Aorta (tissue), 5 donors: ENCODE measurements at regions of chr6 and their contacts with region 1.

Region 1: DNA sequence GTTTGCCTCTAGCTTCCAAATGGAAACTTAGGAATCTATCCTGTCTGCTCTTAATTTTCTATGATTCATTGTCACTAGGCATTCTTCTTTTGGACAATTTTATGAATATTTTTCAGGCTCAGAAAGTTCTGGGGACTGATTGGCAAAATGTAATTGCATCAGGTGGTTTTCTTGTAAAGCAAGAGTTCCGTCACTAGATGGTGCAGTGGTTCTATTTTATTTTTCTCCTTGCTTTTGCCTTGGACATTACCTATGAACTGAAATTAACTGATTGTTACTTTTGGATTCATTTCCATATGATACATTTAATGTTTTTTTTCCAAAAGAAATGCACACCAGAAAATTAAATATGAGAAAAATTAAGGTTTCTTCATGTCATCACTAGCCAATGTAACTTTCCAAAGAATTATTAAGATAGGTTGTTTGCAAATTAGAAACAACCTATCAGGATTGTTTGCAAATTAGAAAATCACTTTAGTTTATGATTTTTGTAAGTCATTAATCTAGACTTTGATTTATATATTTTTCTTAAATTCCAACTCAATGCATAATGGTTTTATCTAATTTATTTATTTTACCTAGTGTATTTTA is 48.0 kb downstream of the TMEM170B start:
- DNase-seq: no peak
- ATAC-seq: no peak
- H3K4me3 ChIP-seq: no peak overlapping the region
- H3K27ac ChIP-seq: no peak overlapping the region
- H3K4me1 ChIP-seq: peaks cover 0 to 4% of the 10 kb centered on the region in 2 donors
- H3K27me3 ChIP-seq: no peaks in the 10 kb centered on the region

Region 2: GRCh38 chr6:11653028-11653583 is 67.6 kb after region 1 on chr6:
- intact Hi-C with region 1: loop called (anchors 2 to 5 kb)
- DNase-seq: peak in 1 of 2 donors; percentile 56
- ATAC-seq: no peak
- H3K4me3 ChIP-seq: no peak overlapping the region
- H3K27ac ChIP-seq: peak overlapping the region in 1 of 2 donors; percentile 6
- H3K4me1 ChIP-seq: peaks cover 0 to 3% of the 10 kb centered on the region in 2 donors
- H3K27me3 ChIP-seq: no peaks in the 10 kb centered on the region

Region 3: GRCh38 chr6:12024699-12025434 is 439.3 kb after region 1 on chr6:
- intact Hi-C with region 1: loop called in 1 of 2 experiments (anchors 5 kb)
- DNase-seq: no peak
- ATAC-seq: peak; percentile 48
- H3K4me3 ChIP-seq: no peak overlapping the region
- H3K27ac ChIP-seq: peak overlapping the region; percentile 26 to 28
- H3K4me1 ChIP-seq: peaks cover 3 to 4% of the 10 kb centered on the region in 2 donors
- H3K27me3 ChIP-seq: no peaks in the 10 kb centered on the region